ENCODE measurements at regions of chrX and their contacts with region 1.

Region 1: GRCh38 chrX:76014321-76014720 is 158.5 kb upstream of the PBDC1 start:
- DNase-seq: no peak
- ATAC-seq: no peak
- H3K4me3 ChIP-seq: no peak overlapping the region
- H3K27ac ChIP-seq: no peak overlapping the region
- H3K4me1 ChIP-seq: no peaks in the 10 kb centered on the region
- H3K27me3 ChIP-seq: no peaks in the 10 kb centered on the region
- CTCF ChIP-seq: no peak
- EP300 ChIP-seq: no peak
- POLR2A ChIP-seq: no peak
- RAD21 ChIP-seq: no peak

Region 2: DNA sequence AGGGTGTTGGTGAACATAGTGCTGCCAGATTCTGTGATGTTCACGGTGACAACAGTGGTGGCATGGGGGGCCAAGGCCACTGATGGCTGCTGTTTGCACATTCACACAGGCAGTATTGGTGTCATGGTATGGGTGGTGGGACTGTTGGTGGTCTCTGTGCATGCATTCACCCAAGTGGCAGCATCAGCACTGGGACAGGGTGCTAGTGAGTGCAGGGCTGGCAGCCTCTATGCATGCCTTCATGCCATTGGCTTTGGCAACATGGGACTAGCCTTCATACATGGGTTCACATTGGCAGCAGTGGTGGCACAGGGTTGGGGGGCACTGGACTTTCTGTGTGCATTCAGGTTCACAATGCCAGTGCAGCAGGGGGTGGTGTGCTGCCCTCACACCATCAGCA is 943.2 kb after region 1 on chrX:
- CTCF ChIA-PET with region 1: no interaction called
- POLR2A ChIA-PET with region 1: no interaction called
- in situ Hi-C with region 1: no loop called
- intact Hi-C with region 1: no loop called
- DNase-seq: no peak
- ATAC-seq: no peak
- H3K4me3 ChIP-seq: no peak overlapping the region
- H3K27ac ChIP-seq: no peak overlapping the region
- H3K4me1 ChIP-seq: no peaks in the 10 kb centered on the region
- H3K27me3 ChIP-seq: no peaks in the 10 kb centered on the region
- CTCF ChIP-seq: no peak
- EP300 ChIP-seq: no peak
- POLR2A ChIP-seq: no peak
- RAD21 ChIP-seq: no peak

Region 3: DNA sequence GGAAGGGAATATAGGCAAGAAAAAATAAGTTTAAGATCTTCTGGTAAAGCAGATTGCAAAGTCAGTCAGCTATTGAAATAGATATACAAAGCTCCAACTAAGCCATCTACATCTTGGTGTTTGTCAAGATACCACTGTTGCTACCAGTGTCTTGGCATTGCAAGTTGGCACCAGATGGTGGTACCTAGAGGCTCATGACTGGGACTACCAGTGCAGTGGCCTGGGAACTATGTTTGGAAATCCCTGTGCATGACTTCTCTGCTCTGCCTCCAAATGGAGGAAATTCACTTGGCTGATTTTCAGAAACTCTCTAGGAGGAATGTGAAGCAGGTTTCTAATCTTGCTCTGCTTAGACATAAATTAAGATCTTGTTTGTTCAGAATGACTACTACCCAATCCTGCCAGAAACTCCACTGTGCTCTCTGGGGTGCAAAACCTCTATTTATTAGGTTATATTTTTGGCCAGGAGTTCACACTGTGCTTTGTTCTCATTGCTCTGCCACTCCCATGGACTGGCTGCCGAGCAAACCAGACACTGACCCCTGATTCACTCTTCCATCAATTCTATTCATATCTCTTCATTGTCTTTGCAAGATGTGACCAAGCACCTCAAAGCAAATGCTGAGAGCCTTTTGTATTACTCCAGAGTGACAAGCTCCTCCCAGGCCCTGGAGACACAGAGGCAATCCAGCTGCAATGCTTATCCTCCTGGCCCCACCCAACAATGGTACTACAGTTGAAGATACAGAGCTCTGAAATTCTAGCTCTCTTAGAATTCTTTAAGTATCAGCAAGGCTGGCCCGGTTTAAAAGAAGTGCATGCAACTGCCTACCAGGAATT is 1160.6 kb after region 1 on chrX:
- CTCF ChIA-PET with region 1: no interaction called
- POLR2A ChIA-PET with region 1: no interaction called
- in situ Hi-C with region 1: loop called (anchors 10 kb)
- intact Hi-C with region 1: no loop called
- DNase-seq: no peak
- ATAC-seq: no peak
- H3K4me3 ChIP-seq: no peak overlapping the region
- H3K27ac ChIP-seq: no peak overlapping the region
- H3K4me1 ChIP-seq: no peaks in the 10 kb centered on the region
- H3K27me3 ChIP-seq: no peaks in the 10 kb centered on the region
- CTCF ChIP-seq: no peak
- EP300 ChIP-seq: no peak
- POLR2A ChIP-seq: no peak
- RAD21 ChIP-seq: no peak